ENCODE measurements at regions of chr1 and their contacts with region 1.

Region 1: GRCh38 chr1:213539464-213539863 is 448.3 kb upstream of the PROX1 start:
- DNase-seq: no peak
- H3K4me3 ChIP-seq: no peak overlapping the region
- H3K27ac ChIP-seq: no peak overlapping the region
- H3K4me1 ChIP-seq: no peaks in the 10 kb centered on the region
- H3K27me3 ChIP-seq: no peaks in the 10 kb centered on the region
- CTCF ChIP-seq: no peak
- POLR2A ChIP-seq: no peak

Region 2: GRCh38 chr1:211985556-211986264 is 1553.8 kb before region 1 on chr1:
- intact Hi-C with region 1: loop called (anchors 5 kb)
- DNase-seq: no peak
- H3K4me3 ChIP-seq: no peak overlapping the region
- H3K27ac ChIP-seq: no peak overlapping the region
- H3K4me1 ChIP-seq: no peaks in the 10 kb centered on the region
- H3K27me3 ChIP-seq: no peaks in the 10 kb centered on the region
- CTCF ChIP-seq: no peak
- POLR2A ChIP-seq: no peak

Region 3: DNA sequence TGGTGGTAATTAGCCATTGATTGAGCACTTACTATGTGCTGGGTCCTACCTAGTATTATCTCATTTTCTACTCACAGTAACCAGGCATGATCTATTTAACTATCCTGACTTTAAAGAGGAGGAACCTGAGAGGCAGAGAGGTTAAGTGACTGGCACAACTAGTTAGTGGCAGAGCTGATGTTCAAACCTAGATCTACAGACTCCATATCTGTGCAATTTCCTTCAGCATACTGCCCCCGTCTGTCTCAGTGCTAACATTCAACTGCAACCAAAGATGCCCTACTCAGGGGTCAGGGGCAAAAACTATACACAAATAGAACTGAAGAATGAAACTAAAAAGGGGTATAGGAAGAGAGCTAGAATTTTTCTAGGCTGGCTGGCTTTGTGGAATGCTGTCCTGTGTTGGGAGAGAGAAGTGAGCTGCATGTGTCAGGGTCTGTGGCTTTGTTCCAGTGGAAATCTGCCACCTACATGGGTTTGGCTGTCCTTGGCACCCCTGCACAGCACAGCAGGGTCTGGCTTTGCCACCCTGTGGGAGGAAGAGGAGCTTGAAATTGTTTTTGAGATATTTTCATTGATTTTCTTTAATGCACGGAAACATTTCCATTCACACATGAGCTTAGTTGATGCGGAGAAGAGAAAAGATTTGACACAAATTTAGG is 120.0 kb before region 1 on chr1:
- intact Hi-C with region 1: no loop called
- DNase-seq: peak in 1 of 2 donors; percentile 22
- H3K4me3 ChIP-seq: no peak overlapping the region
- H3K27ac ChIP-seq: no peak overlapping the region
- H3K4me1 ChIP-seq: no peaks in the 10 kb centered on the region
- H3K27me3 ChIP-seq: no peaks in the 10 kb centered on the region
- CTCF ChIP-seq: no peak
- POLR2A ChIP-seq: no peak

Region 4: GRCh38 chr1:213443415-213443814 is 96.0 kb before region 1 on chr1:
- intact Hi-C with region 1: no loop called
- DNase-seq: no peak
- H3K4me3 ChIP-seq: no peak overlapping the region
- H3K27ac ChIP-seq: no peak overlapping the region
- H3K4me1 ChIP-seq: no peaks in the 10 kb centered on the region
- H3K27me3 ChIP-seq: no peaks in the 10 kb centered on the region
- CTCF ChIP-seq: no peak
- POLR2A ChIP-seq: no peak

Measured in vagina (tissue), 2 donors.